ENCODE measurements at regions of chr2 and their contacts with region 1.

Region 1: DNA sequence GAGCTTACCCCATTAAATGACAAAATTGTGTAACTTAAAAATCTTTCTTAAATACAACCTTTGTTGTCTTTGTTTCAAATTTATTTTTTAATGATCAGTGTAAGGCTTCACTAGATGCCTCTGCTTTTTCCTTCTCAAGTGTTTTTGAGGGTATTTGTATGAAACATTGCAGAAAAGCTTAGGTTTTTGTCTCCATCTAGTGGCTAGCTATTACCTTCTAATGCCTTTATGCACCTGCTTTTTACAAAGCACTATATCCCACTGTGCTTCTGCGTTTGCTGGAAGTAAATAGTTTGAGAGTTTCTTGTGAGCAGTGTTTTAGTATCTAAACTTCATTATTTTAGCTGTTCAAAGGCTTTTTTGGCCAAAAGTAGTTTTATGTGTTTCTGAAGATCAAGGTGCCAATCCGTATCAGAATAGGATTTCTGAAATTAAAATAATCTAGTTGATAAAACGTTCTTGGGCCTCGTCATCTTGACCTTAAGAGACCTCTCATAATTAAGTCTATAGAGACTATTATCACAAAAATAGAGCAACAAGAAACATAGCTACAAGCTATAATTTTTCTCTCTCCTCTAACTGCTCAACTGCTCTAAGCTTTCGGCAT is 47.0 kb downstream of the IWS1 start:
- DNase-seq: peak in 1 of 35 experiments; percentile 66
- ATAC-seq: peak in 2 of 4 experiments; percentile 57 to 58
- H3K4me3 ChIP-seq: no peak overlapping the region
- H3K4me3 Mint-ChIP-seq: no peak overlapping the region
- H3K27ac ChIP-seq: no peak overlapping the region
- H3K27ac Mint-ChIP-seq: no peak overlapping the region
- H3K4me1 ChIP-seq: no peaks in the 10 kb centered on the region
- H3K4me1 Mint-ChIP-seq: no peaks in the 10 kb centered on the region
- H3K27me3 ChIP-seq: no peaks in the 10 kb centered on the region
- H3K27me3 Mint-ChIP-seq: no peaks in the 10 kb centered on the region

Region 2: DNA sequence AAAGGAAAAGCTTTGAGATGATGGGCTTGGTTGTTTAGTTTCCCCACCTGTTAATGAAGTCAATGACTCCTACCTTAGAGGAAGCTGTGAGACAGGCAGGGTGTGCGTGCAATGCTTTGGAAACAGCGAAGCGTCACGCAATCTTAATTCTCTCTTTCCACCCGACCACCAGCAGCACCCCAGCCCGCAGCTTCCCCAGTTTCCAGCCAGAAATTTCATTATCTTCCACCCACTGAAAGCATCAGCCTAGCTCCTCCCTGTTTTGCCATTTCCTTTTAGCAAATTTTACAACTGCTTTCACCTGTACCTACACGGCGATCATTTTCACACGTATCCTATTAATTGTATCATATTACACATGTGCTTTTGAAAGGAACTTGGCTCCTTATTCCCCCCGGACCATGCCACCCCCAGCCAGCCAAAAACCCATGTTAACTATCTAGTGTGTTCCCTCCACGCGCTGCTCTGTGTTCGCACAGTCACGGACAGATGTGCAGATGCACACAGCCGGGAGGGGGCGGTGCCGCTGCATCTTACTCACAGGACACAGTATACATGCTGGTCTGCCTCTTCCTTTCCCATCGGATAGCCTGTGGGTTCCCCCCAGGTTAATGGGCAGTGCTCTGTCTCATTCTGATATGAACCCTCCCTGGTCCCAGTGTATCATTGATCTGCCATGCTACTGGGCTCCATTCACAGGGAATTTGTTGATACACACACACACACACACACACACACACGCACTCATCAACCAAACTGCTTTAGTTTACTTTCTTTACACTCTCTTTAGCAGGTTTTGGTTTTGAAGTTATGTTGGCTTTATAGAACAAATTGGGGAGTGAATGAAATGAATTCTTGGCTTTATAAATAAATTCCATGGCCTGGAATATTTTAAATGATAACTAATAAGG is 281.6 kb before region 1 on chr2:
- CTCF ChIA-PET with region 1: interaction called, 6 to 27 read pairs
- POLR2A ChIA-PET with region 1: no interaction called
- DNase-seq: peak in 29 of 35 experiments; percentile 10 to 63 (median 39)
- ATAC-seq: peak; percentile 80 to 93 (median 86)
- H3K4me3 ChIP-seq: no peak overlapping the region
- H3K4me3 Mint-ChIP-seq: peak overlapping the region; percentile 55 to 69 (median 61)
- H3K27ac ChIP-seq: no peak overlapping the region
- H3K27ac Mint-ChIP-seq: no peak overlapping the region
- H3K4me1 ChIP-seq: peaks cover 0 to 3% of the 10 kb centered on the region in 2 experiments
- H3K4me1 Mint-ChIP-seq: peaks cover 0 to 4% (median 2%) of the 10 kb centered on the region in 3 donors
- H3K27me3 ChIP-seq: peaks cover 0 to 14% of the 10 kb centered on the region in 2 experiments
- H3K27me3 Mint-ChIP-seq: peaks cover 0 to 2% of the 10 kb centered on the region in 2 donors

Region 3: GRCh38 chr2:127324635-127325034 is 154.7 kb before region 1 on chr2:
- CTCF ChIA-PET with region 1: interaction called in 1 of 2 experiments, 10 read pairs
- POLR2A ChIA-PET with region 1: interaction called in 1 of 2 experiments, 8 read pairs
- DNase-seq: peak in 1 of 35 experiments; percentile 28
- ATAC-seq: no peak
- H3K4me3 ChIP-seq: no peak overlapping the region
- H3K4me3 Mint-ChIP-seq: no peak overlapping the region
- H3K27ac ChIP-seq: no peak overlapping the region
- H3K27ac Mint-ChIP-seq: no peak overlapping the region
- H3K4me1 ChIP-seq: no peaks in the 10 kb centered on the region
- H3K4me1 Mint-ChIP-seq: no peaks in the 10 kb centered on the region
- H3K27me3 ChIP-seq: no peaks in the 10 kb centered on the region
- H3K27me3 Mint-ChIP-seq: no peaks in the 10 kb centered on the region

Region 4: GRCh38 chr2:127387655-127388422 is 91.5 kb before region 1 on chr2 and contains the start of gene MAP3K2:
- CTCF ChIA-PET with region 1: no interaction called
- POLR2A ChIA-PET with region 1: no interaction called
- DNase-seq: peak; percentile 87 to 99 (median 94)
- ATAC-seq: peak; percentile 80 to 85 (median 82)
- H3K4me3 ChIP-seq: peak within 1 kb of the TSS; percentile 49 to 71
- H3K4me3 Mint-ChIP-seq: peak within 1 kb of the TSS; percentile 86 to 91 (median 88)
- H3K27ac ChIP-seq: peak within 1 kb of the TSS; percentile 100
- H3K27ac Mint-ChIP-seq: peak within 1 kb of the TSS; percentile 98 to 99
- H3K4me1 ChIP-seq: peaks cover 19 to 28% of the 10 kb centered on the region in 2 experiments
- H3K4me1 Mint-ChIP-seq: peaks cover 63 to 72% (median 68%) of the 10 kb centered on the region in 3 donors
- H3K27me3 ChIP-seq: no peaks in the 10 kb centered on the region
- H3K27me3 Mint-ChIP-seq: no peaks in the 10 kb centered on the region
- total RNA-seq, gene MAP3K2: 81.6 to 89.1 (median 83.2) TPM

Region 5: DNA sequence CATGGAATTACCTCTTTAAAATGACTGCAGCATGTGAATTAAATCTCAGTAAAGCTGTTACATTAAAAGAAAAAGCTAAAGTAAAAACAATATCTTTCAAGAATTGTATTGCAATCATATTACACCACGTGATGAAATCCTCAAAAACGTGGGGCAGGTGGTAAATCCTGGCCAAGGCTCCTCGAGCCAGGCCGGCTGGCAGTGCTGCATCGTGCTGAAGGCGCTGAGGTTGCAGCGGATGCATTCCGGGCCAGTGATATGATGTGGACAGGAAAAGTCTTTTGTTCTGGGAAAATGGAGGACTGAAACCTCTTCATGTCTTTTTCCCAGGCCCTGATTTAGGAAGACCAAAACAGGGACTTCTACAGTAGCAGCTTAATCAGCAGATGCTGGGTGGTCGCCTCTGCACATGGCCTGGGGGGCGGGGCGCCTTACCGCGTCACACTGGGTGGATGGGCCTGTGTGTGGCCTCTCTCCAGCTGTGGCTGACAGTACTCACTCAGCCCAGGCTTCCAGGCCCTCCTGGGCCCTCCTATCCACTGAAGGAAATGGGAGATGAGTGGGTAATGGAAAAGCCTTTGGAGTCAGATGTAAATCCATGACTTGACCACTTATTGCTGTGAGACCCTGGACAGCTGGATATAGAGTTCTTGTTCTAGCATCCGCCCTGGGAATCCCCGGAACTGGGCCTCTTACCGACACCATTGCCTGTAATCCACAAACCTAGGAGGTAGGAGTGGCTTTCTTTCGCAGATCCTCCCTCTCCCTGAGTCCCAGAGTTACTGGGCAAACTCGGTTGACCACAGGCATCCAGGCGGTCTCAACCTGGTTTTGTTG is 15.9 kb before region 1 on chr2:
- CTCF ChIA-PET with region 1: interaction called in 1 of 2 experiments, 10 read pairs
- POLR2A ChIA-PET with region 1: no interaction called
- DNase-seq: no peak
- ATAC-seq: no peak
- H3K4me3 ChIP-seq: no peak overlapping the region
- H3K4me3 Mint-ChIP-seq: no peak overlapping the region
- H3K27ac ChIP-seq: no peak overlapping the region
- H3K27ac Mint-ChIP-seq: no peak overlapping the region
- H3K4me1 ChIP-seq: peaks cover 0 to 11% of the 10 kb centered on the region in 2 experiments
- H3K4me1 Mint-ChIP-seq: peaks cover 17 to 18% (median 18%) of the 10 kb centered on the region in 3 donors
- H3K27me3 ChIP-seq: no peaks in the 10 kb centered on the region
- H3K27me3 Mint-ChIP-seq: no peaks in the 10 kb centered on the region

Measured in T-cell (primary cell).